MCF 10A (cell line): ENCODE measurements at regions of chr17 and their contacts with region 1.

Region 1: GRCh38 chr17:19992803-19993713 is 15.4 kb upstream of the AKAP10 start:
- DNase-seq: peak; percentile 89
- H3K4me3 Mint-ChIP-seq: no peak overlapping the region
- H3K27ac Mint-ChIP-seq: peak overlapping the region; percentile 41
- H3K4me1 Mint-ChIP-seq: peaks cover 10% of the 10 kb centered on the region
- H3K27me3 Mint-ChIP-seq: peaks cover 10% of the 10 kb centered on the region
- CTCF ChIP-seq: peak; percentile 63

Region 2: GRCh38 chr17:19897901-19898300 is 95.2 kb before region 1 on chr17:
- CTCF ChIA-PET with region 1: no interaction called
- POLR2A ChIA-PET with region 1: no interaction called
- intact Hi-C with region 1: no loop called
- DNase-seq: peak; percentile 61
- H3K4me3 Mint-ChIP-seq: no peak overlapping the region
- H3K27ac Mint-ChIP-seq: peak overlapping the region; percentile 79
- H3K4me1 Mint-ChIP-seq: peaks cover 27% of the 10 kb centered on the region
- H3K27me3 Mint-ChIP-seq: no peaks in the 10 kb centered on the region
- CTCF ChIP-seq: no peak

Region 3: DNA sequence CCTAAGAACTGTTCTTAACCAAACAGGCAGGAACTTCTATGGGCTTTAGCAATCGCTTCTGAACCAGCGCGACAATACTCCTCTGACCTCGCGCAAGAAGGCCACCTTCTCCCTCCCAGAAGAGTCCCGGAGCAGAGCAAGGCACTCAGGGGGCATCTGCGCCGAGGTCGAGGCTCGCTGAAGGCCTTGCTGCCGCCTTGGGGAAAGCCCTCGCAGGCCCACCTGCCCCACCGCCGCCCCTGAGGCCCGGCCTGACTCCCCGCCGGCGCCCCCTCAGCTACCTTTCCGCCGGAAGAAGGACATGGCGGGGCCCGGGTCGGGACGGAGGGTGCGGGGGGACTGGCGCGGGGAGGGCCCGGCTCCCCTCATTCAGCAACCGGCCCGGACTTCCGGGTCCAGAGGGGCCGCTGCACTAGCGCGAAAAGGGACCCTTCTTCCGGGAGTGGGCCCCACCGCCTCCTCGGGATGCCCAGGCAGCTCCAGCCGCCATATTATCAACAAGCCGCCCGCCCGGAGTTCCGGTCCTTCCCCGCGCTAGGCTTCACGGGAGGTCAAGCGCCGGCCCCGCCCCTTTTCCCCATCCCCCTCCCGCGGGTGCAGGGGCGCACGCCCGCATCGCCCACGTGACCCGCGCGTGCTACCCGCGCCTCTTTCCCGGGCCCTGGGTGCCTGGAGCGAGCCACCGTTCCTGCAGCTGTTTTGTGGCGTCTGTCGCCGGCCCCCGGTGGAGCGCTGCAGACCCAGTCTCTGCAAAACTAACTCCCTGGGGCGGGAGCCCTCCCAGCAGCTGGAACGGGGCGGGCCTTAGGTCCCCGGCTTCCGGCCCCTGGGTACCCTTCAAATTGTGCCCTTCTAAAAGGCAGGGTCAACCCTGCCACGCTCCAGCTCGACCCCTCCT is 15.5 kb before region 1 on chr17 and contains the start of gene AKAP10:
- CTCF ChIA-PET with region 1: interaction called, 11 read pairs
- POLR2A ChIA-PET with region 1: no interaction called
- intact Hi-C with region 1: no loop called
- DNase-seq: peak; percentile 85
- H3K4me3 Mint-ChIP-seq: peak within 1 kb of the TSS; percentile 82
- H3K27ac Mint-ChIP-seq: peak within 1 kb of the TSS; percentile 81
- H3K4me1 Mint-ChIP-seq: peaks cover 9% of the 10 kb centered on the region
- H3K27me3 Mint-ChIP-seq: no peaks in the 10 kb centered on the region
- CTCF ChIP-seq: no peak
- total RNA-seq, gene AKAP10: 33.7 and 34.1 TPM in 2 replicates

Region 4: DNA sequence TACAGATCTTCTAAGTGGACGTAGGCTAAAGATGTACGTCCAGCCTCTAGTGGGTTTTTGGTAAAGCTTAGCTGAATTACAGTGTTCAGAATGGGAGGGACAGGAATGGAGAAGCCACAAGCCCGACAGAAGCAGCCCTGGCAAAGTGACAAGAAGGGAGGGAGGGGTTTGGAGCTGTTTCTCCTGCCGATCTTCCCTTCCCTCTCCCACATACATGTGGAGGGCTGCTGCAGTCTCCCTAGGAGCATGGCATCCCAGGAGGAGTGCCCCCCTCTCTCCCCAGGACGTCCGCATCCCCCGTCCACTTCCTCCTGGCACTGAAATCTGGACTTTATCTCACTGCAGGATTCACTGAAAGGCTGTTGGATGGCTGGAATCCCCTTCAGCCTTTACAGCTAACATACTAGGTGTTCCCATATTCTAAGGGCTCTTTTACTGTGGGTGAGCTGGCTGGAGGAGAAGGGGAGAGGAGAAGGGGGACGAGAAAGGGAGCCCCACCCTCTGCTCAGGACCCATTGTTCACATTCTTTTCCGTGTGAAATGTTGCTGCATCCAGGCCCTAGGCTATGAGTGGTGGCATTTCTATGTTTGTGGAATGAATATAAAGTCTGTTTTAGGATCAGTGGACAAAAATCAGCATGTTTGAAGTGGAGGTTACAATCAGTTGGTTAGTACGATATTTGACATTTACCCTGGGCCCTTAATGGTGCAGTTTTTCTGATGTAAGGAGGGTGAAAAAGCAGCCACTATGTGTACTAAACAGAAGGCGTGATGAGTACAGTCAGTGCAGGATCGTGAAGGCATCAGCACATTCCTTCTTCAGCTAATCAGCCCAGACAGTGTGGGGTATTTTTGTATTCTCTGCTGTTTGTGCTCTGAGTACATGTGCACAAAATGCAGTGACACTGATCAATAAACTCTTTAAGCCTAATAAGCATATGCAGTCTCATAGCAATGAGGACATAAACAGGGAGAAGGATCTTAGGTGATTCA is 110.7 kb after region 1 on chr17:
- CTCF ChIA-PET with region 1: interaction called, 21 read pairs
- POLR2A ChIA-PET with region 1: interaction called, 4 read pairs
- intact Hi-C with region 1: no loop called
- DNase-seq: no peak
- H3K4me3 Mint-ChIP-seq: no peak overlapping the region
- H3K27ac Mint-ChIP-seq: no peak overlapping the region
- H3K4me1 Mint-ChIP-seq: peaks cover 10% of the 10 kb centered on the region
- H3K27me3 Mint-ChIP-seq: no peaks in the 10 kb centered on the region
- CTCF ChIP-seq: no peak

Region 5: GRCh38 chr17:20121359-20122253 is 128.5 kb after region 1 on chr17:
- CTCF ChIA-PET with region 1: interaction called, 100 read pairs
- POLR2A ChIA-PET with region 1: interaction called, 8 read pairs
- intact Hi-C with region 1: loop called (anchors 1 kb)
- DNase-seq: peak; percentile 77
- H3K4me3 Mint-ChIP-seq: no peak overlapping the region
- H3K27ac Mint-ChIP-seq: no peak overlapping the region
- H3K4me1 Mint-ChIP-seq: peaks cover 10% of the 10 kb centered on the region
- H3K27me3 Mint-ChIP-seq: no peaks in the 10 kb centered on the region
- CTCF ChIP-seq: peak; percentile 93